Dendritic cell treated with granulocyte-macrophage colony-stimulating factor and Interleukin-4, amounts not matched to agents 40 ng/mL and 50 ng/mL, for 4 days (primary cell): ENCODE measurements at regions of chr2 and their contacts with region 1.

Region 1: DNA sequence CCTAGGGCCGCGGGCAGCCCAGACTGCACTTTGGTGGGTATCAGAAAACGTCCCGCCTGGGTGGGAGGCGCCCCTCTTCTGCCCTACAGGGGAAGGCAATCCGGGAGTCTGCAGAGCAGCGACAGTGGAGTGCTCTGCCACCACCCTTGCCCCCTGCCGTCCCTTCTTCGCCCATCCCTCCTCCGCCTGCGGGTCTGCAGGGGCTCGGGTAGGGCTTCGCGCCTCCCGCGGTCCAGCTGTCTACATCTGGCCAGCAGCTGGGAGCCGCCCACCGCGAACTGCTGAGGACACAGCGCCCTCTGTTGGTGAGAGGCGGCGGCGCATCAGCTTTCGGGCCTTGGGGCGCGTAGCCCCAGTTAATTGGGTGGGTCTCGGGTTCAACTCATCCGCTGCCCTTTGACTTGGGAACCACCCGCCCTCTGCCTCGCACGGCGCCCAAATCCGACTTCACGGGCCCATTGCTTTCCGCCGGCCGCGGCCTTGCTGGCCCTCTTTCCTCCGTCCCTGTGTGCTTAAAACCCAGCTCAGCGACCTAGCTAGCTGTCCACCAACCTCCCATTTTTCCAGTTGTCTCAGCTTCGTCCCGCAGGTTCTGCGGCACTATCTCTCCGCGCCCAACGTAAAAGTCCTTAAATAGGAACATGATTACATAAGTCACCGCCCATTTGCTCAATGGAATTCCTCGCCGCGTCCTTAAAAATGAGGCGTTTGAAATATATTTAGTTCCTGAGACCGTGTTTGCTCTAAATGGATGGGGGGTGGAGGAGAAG is 17.6 kb downstream of the WNT10A start:
- H3K4me3 Mint-ChIP-seq: no peak overlapping the region
- H3K27ac Mint-ChIP-seq: no peak overlapping the region
- H3K4me1 Mint-ChIP-seq: peaks cover 26% of the 10 kb centered on the region
- H3K27me3 Mint-ChIP-seq: peaks cover 91% of the 10 kb centered on the region

Region 2: GRCh38 chr2:218679119-218679518 is 219.2 kb before region 1 on chr2:
- intact Hi-C with region 1: no loop called
- H3K4me3 Mint-ChIP-seq: no peak overlapping the region
- H3K27ac Mint-ChIP-seq: no peak overlapping the region
- H3K4me1 Mint-ChIP-seq: peaks cover 13% of the 10 kb centered on the region
- H3K27me3 Mint-ChIP-seq: no peaks in the 10 kb centered on the region

Region 3: DNA sequence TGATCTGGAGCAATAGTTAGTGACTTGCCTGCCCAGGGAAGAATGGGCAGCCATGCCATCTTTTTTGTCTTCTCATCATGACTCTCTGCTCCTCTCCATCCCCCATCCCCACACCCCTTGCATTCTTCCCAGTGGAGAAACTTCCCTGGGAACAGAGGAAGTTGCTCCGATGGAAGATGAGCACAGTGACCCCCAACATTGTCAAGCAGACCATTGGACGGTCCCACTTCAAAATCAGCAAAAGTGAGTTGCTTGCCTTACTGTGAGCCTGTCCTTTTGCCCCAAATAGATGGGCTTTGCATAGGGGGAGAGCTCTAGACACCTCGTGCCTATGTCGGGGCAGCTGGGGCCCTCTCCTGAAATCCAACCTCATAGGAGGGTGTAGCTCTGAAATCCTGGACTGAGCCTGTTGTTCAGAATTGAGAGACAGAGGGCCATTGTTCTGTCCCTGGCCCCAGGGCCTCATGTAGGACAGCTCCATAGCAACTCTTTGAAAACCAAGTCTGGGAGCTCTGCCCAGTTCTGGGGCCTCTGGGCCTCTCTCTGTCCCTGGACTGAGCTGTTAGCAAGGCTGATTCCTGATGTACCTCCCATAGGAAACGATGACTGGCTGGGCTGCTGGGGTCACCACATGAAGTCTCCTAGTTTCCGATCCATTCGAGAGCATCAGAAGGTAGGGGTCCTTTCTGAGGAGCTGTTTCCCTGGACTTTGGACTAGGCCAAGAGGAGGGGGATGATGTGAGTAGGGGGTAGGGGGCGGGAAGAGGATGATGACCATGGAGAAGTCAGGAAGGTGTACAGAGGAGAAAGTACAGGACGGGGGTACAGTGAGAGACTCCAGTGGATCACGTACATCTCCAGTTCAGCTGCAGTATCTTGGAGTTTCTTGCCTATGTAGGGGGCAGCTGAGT is 152.5 kb before region 1 on chr2:
- intact Hi-C with region 1: no loop called
- H3K4me3 Mint-ChIP-seq: no peak overlapping the region
- H3K27ac Mint-ChIP-seq: peak overlapping the region; percentile 76
- H3K4me1 Mint-ChIP-seq: peaks cover 63% of the 10 kb centered on the region
- H3K27me3 Mint-ChIP-seq: peaks cover 2% of the 10 kb centered on the region

Region 4: DNA sequence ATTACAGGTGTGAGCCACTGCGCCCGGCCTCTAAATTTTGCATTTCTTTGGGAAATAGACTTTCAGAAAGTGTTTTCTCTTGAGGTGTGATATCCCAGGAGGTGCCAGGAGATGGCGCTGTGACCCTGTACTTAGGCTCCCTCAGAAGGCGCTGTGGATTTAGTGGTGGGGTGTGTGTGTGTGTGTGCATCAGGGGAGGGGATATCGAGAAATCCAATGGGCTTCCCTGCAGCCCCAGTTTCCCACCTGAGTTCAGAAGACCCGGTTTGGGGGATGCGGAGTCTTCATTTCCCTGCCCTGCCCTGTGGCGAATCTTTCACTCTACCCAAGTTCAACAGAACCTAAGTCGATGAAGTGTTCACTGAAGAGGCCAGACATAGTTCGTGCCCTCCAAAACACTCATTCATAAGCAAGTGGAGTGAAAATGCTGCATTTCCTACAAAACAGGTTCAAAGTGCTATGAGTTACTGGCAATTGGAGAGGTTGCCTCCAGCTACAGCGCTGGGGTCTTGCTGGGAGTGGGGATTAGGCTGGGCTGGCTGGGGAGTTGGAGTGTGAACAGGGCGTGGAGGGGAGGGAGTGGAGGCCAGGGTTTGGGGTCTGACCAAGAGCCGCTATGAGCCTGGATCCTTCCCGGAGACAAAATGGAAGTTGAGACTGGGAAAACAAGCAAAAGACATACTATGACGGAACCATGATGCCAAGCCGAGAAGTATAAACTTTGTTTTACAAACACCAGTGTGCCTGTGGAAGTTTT is 45.2 kb before region 1 on chr2:
- intact Hi-C with region 1: loop called (anchors 1 kb)
- H3K4me3 Mint-ChIP-seq: no peak overlapping the region
- H3K27ac Mint-ChIP-seq: no peak overlapping the region
- H3K4me1 Mint-ChIP-seq: peaks cover 17% of the 10 kb centered on the region
- H3K27me3 Mint-ChIP-seq: peaks cover 78% of the 10 kb centered on the region

Region 5: GRCh38 chr2:218876562-218877219 is 21.6 kb before region 1 on chr2:
- intact Hi-C with region 1: loop called (anchors 1 kb)
- H3K4me3 Mint-ChIP-seq: no peak overlapping the region
- H3K27ac Mint-ChIP-seq: no peak overlapping the region
- H3K4me1 Mint-ChIP-seq: peaks cover 36% of the 10 kb centered on the region
- H3K27me3 Mint-ChIP-seq: peaks cover 95% of the 10 kb centered on the region